GM12878 (cell line): ENCODE measurements at regions of chr18 and their contacts with region 1.

Region 1: DNA sequence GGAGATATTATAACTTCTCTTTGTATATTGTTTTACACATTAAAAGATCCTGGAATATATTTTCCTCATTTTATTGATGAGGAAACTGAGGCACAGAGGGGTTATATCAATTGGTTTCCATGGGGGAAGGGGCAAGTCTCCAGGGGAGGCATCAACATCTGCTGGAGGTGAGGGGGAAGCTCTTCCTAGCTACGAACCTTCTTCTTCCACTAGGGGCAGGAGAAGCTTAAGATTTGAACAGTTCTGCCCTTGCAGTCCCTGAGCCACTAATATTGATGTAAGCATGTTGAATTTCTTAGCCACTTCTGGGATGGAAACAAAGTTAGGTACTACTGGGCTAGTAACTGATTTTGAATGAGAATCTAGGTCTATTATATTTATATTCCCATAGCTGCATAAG is 140.1 kb upstream of the AQP4 start:
- DNase-seq: no peak
- ATAC-seq: peak; percentile 88
- H3K4me3 ChIP-seq: no peak overlapping the region
- H3K27ac ChIP-seq: no peak overlapping the region
- H3K4me1 ChIP-seq: no peaks in the 10 kb centered on the region
- H3K27me3 ChIP-seq: 0 out of 4 replicates have a peak, but pooled peaks cover 0 to 2% of the 10 kb centered on the region in 2 experiments
- CTCF ChIP-seq: peak; percentile 38 to 58 (median 54); a peak in 5 of 6 replicates
- EP300 ChIP-seq: no peak
- POLR2A ChIP-seq: no peak
- RAD21 ChIP-seq: peak; percentile 59

Region 2: GRCh38 chr18:26621161-26622026 is 384.2 kb before region 1 on chr18:
- CTCF ChIA-PET with region 1: interaction called, 6 read pairs
- POLR2A ChIA-PET with region 1: no interaction called
- RAD21 ChIA-PET with region 1: interaction called, 3 read pairs
- SMC1A ChIA-PET with region 1: no interaction called
- in situ Hi-C with region 1: no loop called
- intact Hi-C with region 1: loop called (anchors 10 kb)
- DNase-seq: no peak
- ATAC-seq: peak; percentile 79
- H3K4me3 ChIP-seq: no peak overlapping the region
- H3K27ac ChIP-seq: no peak overlapping the region
- H3K4me1 ChIP-seq: no peaks in the 10 kb centered on the region
- H3K27me3 ChIP-seq: no peaks in the 10 kb centered on the region
- CTCF ChIP-seq: peak; percentile 51 to 56 (median 51); a peak in 5 of 6 replicates
- EP300 ChIP-seq: no peak
- POLR2A ChIP-seq: no peak
- RAD21 ChIP-seq: peak; percentile 76

Region 3: GRCh38 chr18:26804519-26804918 is 201.1 kb before region 1 on chr18:
- CTCF ChIA-PET with region 1: interaction called, 10 read pairs
- POLR2A ChIA-PET with region 1: no interaction called
- RAD21 ChIA-PET with region 1: interaction called, 7 read pairs
- SMC1A ChIA-PET with region 1: interaction called, 8 read pairs
- in situ Hi-C with region 1: loop called (anchors 5 kb)
- intact Hi-C with region 1: loop called (anchors 2 kb)
- DNase-seq: no peak
- ATAC-seq: no peak
- H3K4me3 ChIP-seq: no peak overlapping the region
- H3K27ac ChIP-seq: no peak overlapping the region
- H3K4me1 ChIP-seq: no peaks in the 10 kb centered on the region
- H3K27me3 ChIP-seq: no peaks in the 10 kb centered on the region
- CTCF ChIP-seq: peak; percentile 21 to 41 (median 33); a peak in 4 of 6 replicates
- EP300 ChIP-seq: no peak
- POLR2A ChIP-seq: no peak
- RAD21 ChIP-seq: peak; percentile 55

Region 4: GRCh38 chr18:26813043-26813442 is 192.5 kb before region 1 on chr18:
- CTCF ChIA-PET with region 1: interaction called, 3 read pairs
- POLR2A ChIA-PET with region 1: no interaction called
- RAD21 ChIA-PET with region 1: interaction called, 6 read pairs
- SMC1A ChIA-PET with region 1: interaction called, 4 read pairs
- in situ Hi-C with region 1: no loop called
- intact Hi-C with region 1: loop called (anchors 1 kb)
- DNase-seq: peak; percentile 16
- ATAC-seq: peak; percentile 82
- H3K4me3 ChIP-seq: no peak overlapping the region
- H3K27ac ChIP-seq: no peak overlapping the region
- H3K4me1 ChIP-seq: no peaks in the 10 kb centered on the region
- H3K27me3 ChIP-seq: no peaks in the 10 kb centered on the region
- CTCF ChIP-seq: peak; percentile 58 to 69 (median 60)
- EP300 ChIP-seq: no peak
- POLR2A ChIP-seq: no peak
- RAD21 ChIP-seq: peak; percentile 81

Region 5: GRCh38 chr18:26941584-26941983 is 64.0 kb before region 1 on chr18:
- CTCF ChIA-PET with region 1: no interaction called
- POLR2A ChIA-PET with region 1: no interaction called
- RAD21 ChIA-PET with region 1: no interaction called
- SMC1A ChIA-PET with region 1: no interaction called
- in situ Hi-C with region 1: no loop called
- intact Hi-C with region 1: loop called (anchors 5 kb)
- DNase-seq: no peak
- ATAC-seq: no peak
- H3K4me3 ChIP-seq: no peak overlapping the region
- H3K27ac ChIP-seq: no peak overlapping the region
- H3K4me1 ChIP-seq: no peaks in the 10 kb centered on the region
- H3K27me3 ChIP-seq: no peaks in the 10 kb centered on the region
- CTCF ChIP-seq: no peak
- EP300 ChIP-seq: no peak
- POLR2A ChIP-seq: no peak
- RAD21 ChIP-seq: no peak

Region 6: DNA sequence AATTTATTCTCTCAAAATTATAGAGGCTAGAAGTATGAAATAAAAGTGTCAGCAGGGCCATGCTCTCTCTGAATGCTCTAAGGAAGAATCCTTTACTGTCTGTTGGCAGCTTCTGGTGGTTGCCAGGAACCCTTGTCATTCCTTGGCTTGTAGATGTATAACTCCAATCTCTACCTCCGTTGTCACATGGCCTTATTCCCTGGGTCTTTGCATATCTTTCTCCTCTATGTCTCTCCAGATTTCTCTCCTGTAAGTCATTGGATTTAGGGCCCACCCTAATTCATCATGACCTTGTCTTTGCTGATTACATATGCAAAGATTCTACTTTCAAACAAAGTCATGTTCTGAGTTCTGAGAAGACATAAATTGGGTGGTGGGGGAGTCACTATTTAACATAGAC is 306.6 kb after region 1 on chr18:
- CTCF ChIA-PET with region 1: no interaction called
- POLR2A ChIA-PET with region 1: no interaction called
- RAD21 ChIA-PET with region 1: no interaction called
- SMC1A ChIA-PET with region 1: no interaction called
- in situ Hi-C with region 1: no loop called
- intact Hi-C with region 1: no loop called
- DNase-seq: no peak
- ATAC-seq: no peak
- H3K4me3 ChIP-seq: no peak overlapping the region
- H3K27ac ChIP-seq: no peak overlapping the region
- H3K4me1 ChIP-seq: no peaks in the 10 kb centered on the region
- H3K27me3 ChIP-seq: no peaks in the 10 kb centered on the region
- CTCF ChIP-seq: no peak
- EP300 ChIP-seq: no peak
- POLR2A ChIP-seq: no peak
- RAD21 ChIP-seq: no peak

Region 7: GRCh38 chr18:27599202-27599829 is 593.7 kb after region 1 on chr18:
- CTCF ChIA-PET with region 1: interaction called, 15 read pairs
- POLR2A ChIA-PET with region 1: no interaction called
- RAD21 ChIA-PET with region 1: interaction called, 4 read pairs
- SMC1A ChIA-PET with region 1: interaction called, 5 read pairs
- in situ Hi-C with region 1: loop called (anchors 5 kb)
- intact Hi-C with region 1: no loop called
- DNase-seq: no peak
- ATAC-seq: peak; percentile 88
- H3K4me3 ChIP-seq: no peak overlapping the region
- H3K27ac ChIP-seq: no peak overlapping the region
- H3K4me1 ChIP-seq: no peaks in the 10 kb centered on the region
- H3K27me3 ChIP-seq: no peaks in the 10 kb centered on the region
- CTCF ChIP-seq: peak; percentile 87 to 95 (median 87)
- EP300 ChIP-seq: no peak
- POLR2A ChIP-seq: no peak
- RAD21 ChIP-seq: peak; percentile 79